ENCODE measurements at regions of chr3 and their contacts with region 1.

Region 1: GRCh38 chr3:155504682-155505081 is 211.2 kb upstream of the STRIT1 start:
- DNase-seq: no peak
- ATAC-seq: no peak
- H3K4me3 ChIP-seq: no peak overlapping the region
- H3K27ac ChIP-seq: no peak overlapping the region
- H3K4me1 ChIP-seq: no peaks in the 10 kb centered on the region
- H3K27me3 ChIP-seq: no peaks in the 10 kb centered on the region
- CTCF ChIP-seq: no peak
- POLR2A ChIP-seq: no peak

Region 2: DNA sequence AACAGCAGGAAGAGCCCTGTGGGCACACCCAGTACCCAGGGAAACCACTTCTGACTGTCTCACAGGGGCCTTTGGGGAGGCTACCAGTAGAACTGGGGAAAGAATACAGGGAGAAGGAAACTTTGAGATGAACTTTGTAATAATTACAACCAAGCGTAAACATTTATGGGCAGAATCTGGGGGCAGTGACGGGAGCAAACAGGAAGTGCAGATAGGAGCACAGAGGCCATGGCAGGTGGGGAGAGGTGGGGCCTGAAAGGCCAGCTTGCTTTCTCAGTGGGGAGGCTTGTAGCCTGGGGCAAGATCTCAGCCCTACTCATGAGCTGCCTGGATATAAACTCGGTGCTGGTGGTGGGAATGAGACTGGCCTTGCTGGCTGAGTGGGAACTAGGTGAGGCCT is 30.4 kb after region 1 on chr3:
- in situ Hi-C with region 1: loop called in 1 of 4 experiments (anchors 5 kb)
- intact Hi-C with region 1: no loop called
- DNase-seq: no peak
- ATAC-seq: no peak
- H3K4me3 ChIP-seq: no peak overlapping the region
- H3K27ac ChIP-seq: no peak overlapping the region
- H3K4me1 ChIP-seq: no peaks in the 10 kb centered on the region
- H3K27me3 ChIP-seq: no peaks in the 10 kb centered on the region
- CTCF ChIP-seq: no peak
- POLR2A ChIP-seq: no peak